ENCODE measurements at regions of chr2 and their contacts with region 1.

Region 1: GRCh38 chr2:80238692-80239469 is 65.7 kb downstream of the LRRTM1 start:
- DNase-seq: no peak
- H3K4me3 ChIP-seq: no peak overlapping the region
- CTCF ChIP-seq: peak; percentile 69

Region 2: GRCh38 chr2:79935771-79936657 is 302.9 kb before region 1 on chr2:
- CTCF ChIA-PET with region 1: interaction called, 17 read pairs
- POLR2A ChIA-PET with region 1: no interaction called
- DNase-seq: peak; percentile 34
- H3K4me3 ChIP-seq: no peak overlapping the region; the same call in 1 of the 2 replicates
- CTCF ChIP-seq: peak; percentile 78

Region 3: DNA sequence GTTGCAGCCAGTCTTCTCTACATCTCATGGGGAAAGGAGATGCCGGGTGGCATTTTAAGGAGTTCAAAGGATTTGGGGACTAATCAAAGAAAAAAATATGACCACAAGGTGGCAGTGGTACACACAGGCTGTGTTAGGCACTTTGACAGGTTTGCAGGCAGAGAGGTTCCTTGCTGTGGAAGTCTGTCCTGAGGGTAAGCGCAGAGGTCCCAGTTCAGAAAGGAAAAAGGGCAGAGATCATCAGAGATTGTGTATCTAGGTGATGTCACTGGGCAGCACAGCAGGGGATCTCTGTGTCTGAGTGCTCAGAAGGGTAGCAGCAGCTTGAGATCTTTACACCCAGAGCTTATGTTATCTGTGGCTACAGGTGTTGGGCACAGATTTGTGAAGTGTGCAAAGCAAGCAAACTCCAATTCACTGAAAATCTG is 165.7 kb before region 1 on chr2:
- CTCF ChIA-PET with region 1: interaction called, 172 read pairs
- POLR2A ChIA-PET with region 1: no interaction called
- DNase-seq: no peak
- H3K4me3 ChIP-seq: no peak overlapping the region
- CTCF ChIP-seq: peak; percentile 61

Region 4: GRCh38 chr2:80086831-80087230 is 152.1 kb before region 1 on chr2:
- CTCF ChIA-PET with region 1: interaction called, 172 read pairs
- POLR2A ChIA-PET with region 1: no interaction called
- DNase-seq: peak; percentile 77
- H3K4me3 ChIP-seq: no peak overlapping the region
- CTCF ChIP-seq: no peak

Region 5: DNA sequence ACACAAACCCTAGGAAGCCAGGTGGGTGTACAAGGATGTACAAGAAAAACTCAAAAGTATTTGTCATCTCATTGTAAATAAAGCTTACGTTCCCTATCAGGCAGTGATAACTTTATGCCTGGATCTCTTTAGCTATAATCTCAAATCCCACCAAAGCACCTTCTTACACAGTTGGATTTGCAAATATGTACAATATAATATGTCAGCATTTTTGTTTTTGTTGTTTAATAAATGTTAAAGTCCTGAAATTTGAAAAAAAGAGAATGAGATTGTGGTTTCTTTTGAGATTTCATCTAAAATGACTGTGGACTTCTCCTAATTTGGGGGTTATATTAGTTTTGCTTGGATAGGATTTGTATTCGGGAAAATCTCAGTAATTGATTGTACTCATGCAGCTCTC is 16.2 kb before region 1 on chr2:
- CTCF ChIA-PET with region 1: interaction called, 25 read pairs
- POLR2A ChIA-PET with region 1: no interaction called
- DNase-seq: no peak
- H3K4me3 ChIP-seq: no peak overlapping the region
- CTCF ChIP-seq: no peak

Region 6: DNA sequence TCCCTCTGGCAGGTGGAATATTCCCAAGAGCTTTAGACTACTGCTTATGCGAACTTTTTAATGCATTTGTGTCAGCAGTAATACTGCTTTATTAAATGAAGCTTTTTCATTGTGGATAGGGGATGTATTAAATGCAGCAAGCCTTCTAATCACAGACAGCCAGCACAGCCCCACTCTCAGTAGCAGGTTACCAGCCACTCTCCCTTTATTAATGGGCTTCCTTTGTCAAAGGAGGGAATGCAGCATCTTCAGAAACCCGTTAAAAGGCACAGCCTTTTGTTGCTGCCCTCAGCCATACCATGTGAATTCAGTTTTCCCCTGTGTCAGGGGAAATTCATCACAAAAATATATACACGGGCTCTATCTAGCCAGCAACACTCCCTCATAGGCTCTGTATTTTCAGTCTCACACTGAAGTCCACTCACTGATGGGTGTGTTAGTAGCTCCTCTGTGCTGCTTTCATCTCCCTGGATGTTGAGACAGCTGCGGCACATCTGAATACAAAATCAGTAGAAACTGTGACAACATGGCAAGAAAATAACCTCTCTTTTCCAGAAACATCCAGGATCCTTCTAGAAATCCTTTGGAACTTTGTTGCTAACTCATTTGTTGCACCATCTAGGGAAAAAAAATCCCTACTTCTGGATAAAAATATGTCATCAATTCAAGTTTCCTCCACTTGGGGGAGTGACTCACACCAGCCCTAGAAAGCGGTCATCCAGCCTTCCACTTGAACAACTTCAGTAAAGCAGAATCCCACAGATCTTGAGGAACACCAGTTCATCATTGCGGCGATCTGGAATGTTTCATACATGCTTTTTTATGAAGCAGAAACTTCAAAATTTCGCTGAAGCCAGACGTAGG is 17.3 kb after region 1 on chr2:
- CTCF ChIA-PET with region 1: interaction called, 34 read pairs
- POLR2A ChIA-PET with region 1: no interaction called
- DNase-seq: no peak
- H3K4me3 ChIP-seq: no peak overlapping the region
- CTCF ChIP-seq: peak; percentile 21